ENCODE measurements at regions of chr11 and their contacts with region 1.

Region 1: GRCh38 chr11:122743949-122744348 is 88.4 kb downstream of the UBASH3B start:
- DNase-seq: peak; percentile 54 to 91 (median 65)
- ATAC-seq: peak; percentile 64 to 83
- H3K4me3 Mint-ChIP-seq: no peak overlapping the region
- H3K27ac Mint-ChIP-seq: no peak overlapping the region
- H3K4me1 Mint-ChIP-seq: peaks cover 11 to 44% (median 27%) of the 10 kb centered on the region in 4 donors
- H3K27me3 Mint-ChIP-seq: no peaks in the 10 kb centered on the region

Region 2: DNA sequence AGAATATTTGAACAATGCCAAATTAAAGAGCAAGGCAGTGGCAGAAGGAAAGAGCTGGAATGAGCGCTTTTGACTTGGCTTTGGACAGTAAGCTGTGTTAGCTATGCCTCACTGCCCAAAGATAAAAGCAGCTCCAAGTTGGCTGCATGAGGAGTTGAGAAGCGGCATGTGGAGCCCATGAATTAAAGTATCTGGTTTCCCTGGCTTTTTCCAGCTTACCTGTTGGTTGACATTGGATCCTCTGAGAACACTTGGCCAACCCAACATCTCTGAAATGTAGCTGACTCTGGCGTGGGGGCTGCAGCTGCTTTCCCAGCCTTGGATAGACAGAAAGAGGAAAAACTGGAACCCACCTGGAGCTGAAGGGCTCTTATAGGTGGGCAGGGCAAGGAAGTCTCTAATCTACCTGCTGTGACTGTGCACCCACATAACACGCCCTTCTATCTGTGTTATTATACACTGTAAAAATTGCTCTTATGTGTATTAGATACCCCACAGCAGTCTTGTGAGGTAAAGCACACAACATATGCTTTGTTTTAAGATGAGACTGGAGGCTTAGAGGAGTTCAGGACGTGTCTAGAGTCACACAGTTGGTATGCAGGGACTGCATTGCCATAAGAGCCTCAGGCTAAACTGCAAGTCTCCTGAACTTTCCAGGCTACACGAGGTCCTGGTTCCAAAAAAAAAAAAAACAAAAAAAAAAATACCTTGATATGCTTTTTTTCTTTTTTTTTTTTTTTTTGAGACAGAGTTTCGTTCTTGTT is 82.6 kb before region 1 on chr11:
- POLR2A ChIA-PET with region 1: interaction called, 28 read pairs
- DNase-seq: no peak
- ATAC-seq: no peak
- H3K4me3 Mint-ChIP-seq: peak overlapping the region in 2 of 10 donors; percentile 8 to 81
- H3K27ac Mint-ChIP-seq: peak overlapping the region in 9 of 10 donors; percentile 34 to 95 (median 83)
- H3K4me1 Mint-ChIP-seq: peaks cover 38 to 94% (median 83%) of the 10 kb centered on the region in 4 donors
- H3K27me3 Mint-ChIP-seq: no peaks in the 10 kb centered on the region

Region 3: GRCh38 chr11:122673701-122674100 is 70.2 kb before region 1 on chr11:
- POLR2A ChIA-PET with region 1: interaction called, 27 read pairs
- DNase-seq: peak in 1 of 10 donors; percentile 15
- ATAC-seq: no peak
- H3K4me3 Mint-ChIP-seq: peak overlapping the region in 5 of 10 donors; percentile 12 to 70 (median 22)
- H3K27ac Mint-ChIP-seq: peak overlapping the region in 7 of 10 donors; percentile 43 to 94 (median 77)
- H3K4me1 Mint-ChIP-seq: peaks cover 42 to 94% (median 85%) of the 10 kb centered on the region in 4 donors
- H3K27me3 Mint-ChIP-seq: no peaks in the 10 kb centered on the region

Region 4: DNA sequence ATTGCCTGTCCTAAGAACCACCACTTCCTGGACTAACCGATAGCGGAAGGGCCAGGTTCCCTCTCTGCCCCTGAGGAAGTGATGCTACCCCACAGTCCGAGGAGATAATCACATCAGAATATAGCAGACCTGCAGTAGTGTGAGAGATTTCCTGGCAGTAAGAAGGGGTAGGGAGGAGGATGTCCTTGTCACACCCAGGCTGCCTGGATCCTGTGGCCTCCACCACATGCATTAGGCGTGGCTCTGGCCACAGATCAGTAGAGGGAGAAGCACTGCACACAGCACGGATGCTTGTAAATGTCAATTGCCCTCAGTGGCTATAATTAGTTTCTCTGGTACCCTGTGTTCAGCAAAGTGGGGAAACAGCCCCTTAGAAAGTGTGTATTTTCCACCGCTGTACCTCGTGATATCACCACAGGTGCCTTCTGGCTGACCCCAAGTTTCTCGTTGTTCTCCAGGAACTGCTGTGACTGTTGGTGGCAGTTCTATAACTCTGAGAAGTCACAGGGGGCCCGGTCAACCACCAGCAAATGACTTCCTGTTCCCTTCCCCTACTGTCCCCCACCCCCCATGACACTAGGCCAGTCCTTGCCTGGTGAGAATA is 26.6 kb before region 1 on chr11:
- POLR2A ChIA-PET with region 1: interaction called, 27 read pairs
- DNase-seq: peak in 8 of 10 donors; percentile 9 to 59 (median 32)
- ATAC-seq: peak; percentile 50 to 72
- H3K4me3 Mint-ChIP-seq: peak overlapping the region; percentile 30 to 84 (median 66)
- H3K27ac Mint-ChIP-seq: peak overlapping the region; percentile 43 to 94 (median 88)
- H3K4me1 Mint-ChIP-seq: peaks cover 32 to 98% (median 78%) of the 10 kb centered on the region in 4 donors
- H3K27me3 Mint-ChIP-seq: no peaks in the 10 kb centered on the region

Region 5: GRCh38 chr11:122754553-122755322 is 10.8 kb after region 1 on chr11:
- POLR2A ChIA-PET with region 1: interaction called, 17 read pairs
- DNase-seq: peak in 8 of 10 donors; percentile 12 to 68 (median 44)
- ATAC-seq: peak; percentile 56 to 58
- H3K4me3 Mint-ChIP-seq: peak overlapping the region in 1 of 10 donors; percentile 9
- H3K27ac Mint-ChIP-seq: peak overlapping the region in 7 of 10 donors; percentile 9 to 87 (median 67)
- H3K4me1 Mint-ChIP-seq: peaks cover 28 to 82% (median 68%) of the 10 kb centered on the region in 4 donors
- H3K27me3 Mint-ChIP-seq: no peaks in the 10 kb centered on the region

Region 6: GRCh38 chr11:122778148-122778547 is 34.2 kb after region 1 on chr11:
- POLR2A ChIA-PET with region 1: no interaction called
- DNase-seq: no peak
- ATAC-seq: no peak
- H3K4me3 Mint-ChIP-seq: no peak overlapping the region
- H3K27ac Mint-ChIP-seq: peak overlapping the region in 4 of 10 donors; percentile 12 to 46 (median 30)
- H3K4me1 Mint-ChIP-seq: peaks cover 19 to 53% (median 39%) of the 10 kb centered on the region in 4 donors
- H3K27me3 Mint-ChIP-seq: no peaks in the 10 kb centered on the region

Region 7: GRCh38 chr11:122863704-122864326 is 119.9 kb after region 1 on chr11:
- POLR2A ChIA-PET with region 1: no interaction called
- DNase-seq: peak in 4 of 10 donors; percentile 22 to 36 (median 30)
- ATAC-seq: no peak
- H3K4me3 Mint-ChIP-seq: no peak overlapping the region
- H3K27ac Mint-ChIP-seq: peak overlapping the region in 6 of 10 donors; percentile 15 to 78 (median 56)
- H3K4me1 Mint-ChIP-seq: peaks cover 2 to 10% (median 7%) of the 10 kb centered on the region in 4 donors
- H3K27me3 Mint-ChIP-seq: no peaks in the 10 kb centered on the region

Measured in naive thymus-derived CD8-positive, alpha-beta T cell (primary cell).